Ovary (tissue), 10 donors: ENCODE measurements at regions of chr1 and their contacts with region 1.

Region 1: GRCh38 chr1:52127181-52128180 is 14.4 kb upstream of the ZFYVE9 start:
- DNase-seq: peak in 3 of 5 donors; percentile 11 to 40 (median 31)
- H3K4me3 ChIP-seq: no peak overlapping the region
- H3K27ac ChIP-seq: no peak overlapping the region
- H3K4me1 ChIP-seq: no peaks in the 10 kb centered on the region
- H3K27me3 ChIP-seq: no peaks in the 10 kb centered on the region
- CTCF ChIP-seq: peak; percentile 23 to 53 (median 47)
- EP300 ChIP-seq: no peak
- POLR2A ChIP-seq: no peak

Region 2: GRCh38 chr1:52179085-52179484 is 51.6 kb after region 1 on chr1:
- intact Hi-C with region 1: no loop called
- DNase-seq: no peak
- H3K4me3 ChIP-seq: no peak overlapping the region
- H3K27ac ChIP-seq: no peak overlapping the region
- H3K4me1 ChIP-seq: no peaks in the 10 kb centered on the region
- H3K27me3 ChIP-seq: no peaks in the 10 kb centered on the region
- CTCF ChIP-seq: no peak
- EP300 ChIP-seq: no peak
- POLR2A ChIP-seq: no peak

Region 3: GRCh38 chr1:52296345-52296744 is 168.9 kb after region 1 on chr1:
- intact Hi-C with region 1: loop called in 3 of 4 experiments (anchors 10 kb)
- DNase-seq: no peak
- H3K4me3 ChIP-seq: no peak overlapping the region
- H3K27ac ChIP-seq: no peak overlapping the region
- H3K4me1 ChIP-seq: no peaks in the 10 kb centered on the region
- H3K27me3 ChIP-seq: no peaks in the 10 kb centered on the region
- CTCF ChIP-seq: peak in 2 of 3 donors; percentile 15 to 40
- EP300 ChIP-seq: no peak
- POLR2A ChIP-seq: no peak

Region 4: GRCh38 chr1:52416811-52417210 is 289.3 kb after region 1 on chr1:
- intact Hi-C with region 1: loop called in 1 of 4 experiments (anchors 5 kb)
- DNase-seq: no peak
- H3K4me3 ChIP-seq: no peak overlapping the region
- H3K27ac ChIP-seq: no peak overlapping the region
- H3K4me1 ChIP-seq: no peaks in the 10 kb centered on the region
- H3K27me3 ChIP-seq: no peaks in the 10 kb centered on the region
- CTCF ChIP-seq: no peak
- EP300 ChIP-seq: no peak
- POLR2A ChIP-seq: no peak

Region 5: DNA sequence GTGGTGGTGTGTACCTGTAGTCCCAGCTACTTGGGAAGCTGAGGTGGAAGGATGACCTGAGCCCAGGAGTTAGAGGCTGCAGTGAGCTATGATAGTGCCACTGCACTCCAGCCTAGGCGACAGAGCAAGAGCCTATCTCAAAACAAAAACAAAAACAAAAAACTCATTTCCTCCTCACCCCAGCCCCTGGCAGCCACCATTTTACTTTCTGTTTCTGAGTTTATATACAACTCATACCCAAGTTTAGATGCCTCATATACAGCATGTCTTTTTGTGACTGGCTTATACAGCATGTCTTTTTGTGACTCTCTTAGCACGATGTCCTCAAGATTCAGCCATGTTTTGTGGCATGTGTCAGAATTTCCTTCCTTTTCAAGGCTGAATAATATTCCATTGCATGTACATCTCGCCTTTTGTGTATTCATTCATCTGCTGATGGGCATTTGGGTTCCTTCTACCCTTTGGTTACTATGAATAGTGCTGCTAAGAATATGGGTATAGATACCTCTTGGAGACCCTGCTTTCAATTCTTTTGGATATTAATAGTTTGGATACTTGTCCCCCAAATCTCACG is 556.0 kb after region 1 on chr1:
- intact Hi-C with region 1: loop called in 1 of 4 experiments (anchors 10 kb)
- DNase-seq: no peak
- H3K4me3 ChIP-seq: no peak overlapping the region
- H3K27ac ChIP-seq: no peak overlapping the region
- H3K4me1 ChIP-seq: no peaks in the 10 kb centered on the region
- H3K27me3 ChIP-seq: no peaks in the 10 kb centered on the region
- CTCF ChIP-seq: no peak
- EP300 ChIP-seq: no peak
- POLR2A ChIP-seq: no peak